Naive thymus-derived CD4-positive, alpha-beta T cell (primary cell): ENCODE measurements at regions of chr5 and their contacts with region 1.

Region 1: GRCh38 chr5:79133657-79134451 is 22.2 kb downstream of the BHMT start:
- DNase-seq: peak; percentile 26 to 60 (median 48)
- ATAC-seq: peak; percentile 84
- H3K4me3 ChIP-seq: peak overlapping the region; percentile 42
- H3K4me3 Mint-ChIP-seq: peak overlapping the region; percentile 45 to 80 (median 76)
- H3K27ac ChIP-seq: no peak overlapping the region
- H3K27ac Mint-ChIP-seq: peak overlapping the region in 4 of 9 donors; percentile 4 to 76 (median 42)
- H3K4me1 ChIP-seq: peaks cover 9 to 11% of the 10 kb centered on the region in 2 donors
- H3K4me1 Mint-ChIP-seq: peaks cover 7 to 17% (median 10%) of the 10 kb centered on the region in 7 donors
- H3K27me3 ChIP-seq: no peaks in the 10 kb centered on the region
- H3K27me3 Mint-ChIP-seq: peaks cover 0 to 9% (median 4%) of the 10 kb centered on the region in 5 donors

Region 2: GRCh38 chr5:78320401-78320800 is 813.5 kb before region 1 on chr5:
- CTCF ChIA-PET with region 1: interaction called, 4 read pairs
- POLR2A ChIA-PET with region 1: no interaction called
- intact Hi-C with region 1: loop called in 1 of 2 experiments (anchors 5 kb)
- DNase-seq: peak in 4 of 9 donors; percentile 6 to 15 (median 8)
- ATAC-seq: no peak
- H3K4me3 ChIP-seq: no peak overlapping the region
- H3K4me3 Mint-ChIP-seq: no peak overlapping the region
- H3K27ac ChIP-seq: no peak overlapping the region
- H3K27ac Mint-ChIP-seq: no peak overlapping the region
- H3K4me1 ChIP-seq: no peaks in the 10 kb centered on the region
- H3K4me1 Mint-ChIP-seq: no peaks in the 10 kb centered on the region
- H3K27me3 ChIP-seq: no peaks in the 10 kb centered on the region
- H3K27me3 Mint-ChIP-seq: peaks cover 0 to 18% (median 5%) of the 10 kb centered on the region in 5 donors

Region 3: GRCh38 chr5:78886341-78887230 is 247.3 kb before region 1 on chr5:
- CTCF ChIA-PET with region 1: no interaction called
- POLR2A ChIA-PET with region 1: no interaction called
- intact Hi-C with region 1: loop called in 1 of 2 experiments (anchors 1 kb)
- DNase-seq: peak in 2 of 9 donors; percentile 6 to 7
- ATAC-seq: no peak
- H3K4me3 ChIP-seq: no peak overlapping the region
- H3K4me3 Mint-ChIP-seq: no peak overlapping the region
- H3K27ac ChIP-seq: no peak overlapping the region
- H3K27ac Mint-ChIP-seq: no peak overlapping the region
- H3K4me1 ChIP-seq: peaks cover 0 to 6% of the 10 kb centered on the region in 2 donors
- H3K4me1 Mint-ChIP-seq: peaks cover 3 to 21% (median 19%) of the 10 kb centered on the region in 7 donors
- H3K27me3 ChIP-seq: no peaks in the 10 kb centered on the region
- H3K27me3 Mint-ChIP-seq: no peaks in the 10 kb centered on the region

Region 4: GRCh38 chr5:79020861-79021561 is 112.8 kb before region 1 on chr5:
- CTCF ChIA-PET with region 1: interaction called, 49 read pairs
- POLR2A ChIA-PET with region 1: no interaction called
- intact Hi-C with region 1: loop called (anchors 1 kb)
- DNase-seq: peak in 6 of 9 donors; percentile 4 to 25 (median 14)
- ATAC-seq: peak; percentile 79
- H3K4me3 ChIP-seq: no peak overlapping the region
- H3K4me3 Mint-ChIP-seq: peak overlapping the region in 2 of 10 donors; percentile 24 to 44
- H3K27ac ChIP-seq: no peak overlapping the region
- H3K27ac Mint-ChIP-seq: no peak overlapping the region
- H3K4me1 ChIP-seq: no peaks in the 10 kb centered on the region
- H3K4me1 Mint-ChIP-seq: peaks cover 7 to 14% (median 12%) of the 10 kb centered on the region in 7 donors
- H3K27me3 ChIP-seq: peaks cover 0 to 3% of the 10 kb centered on the region in 2 donors
- H3K27me3 Mint-ChIP-seq: peaks cover 56 to 79% (median 63%) of the 10 kb centered on the region in 5 donors

Region 5: GRCh38 chr5:79050498-79050897 is 83.4 kb before region 1 on chr5:
- CTCF ChIA-PET with region 1: no interaction called
- POLR2A ChIA-PET with region 1: no interaction called
- intact Hi-C with region 1: no loop called
- DNase-seq: no peak
- ATAC-seq: no peak
- H3K4me3 ChIP-seq: no peak overlapping the region
- H3K4me3 Mint-ChIP-seq: no peak overlapping the region
- H3K27ac ChIP-seq: no peak overlapping the region
- H3K27ac Mint-ChIP-seq: no peak overlapping the region
- H3K4me1 ChIP-seq: no peaks in the 10 kb centered on the region
- H3K4me1 Mint-ChIP-seq: no peaks in the 10 kb centered on the region
- H3K27me3 ChIP-seq: no peaks in the 10 kb centered on the region
- H3K27me3 Mint-ChIP-seq: peaks cover 0 to 19% (median 10%) of the 10 kb centered on the region in 5 donors

Region 6: DNA sequence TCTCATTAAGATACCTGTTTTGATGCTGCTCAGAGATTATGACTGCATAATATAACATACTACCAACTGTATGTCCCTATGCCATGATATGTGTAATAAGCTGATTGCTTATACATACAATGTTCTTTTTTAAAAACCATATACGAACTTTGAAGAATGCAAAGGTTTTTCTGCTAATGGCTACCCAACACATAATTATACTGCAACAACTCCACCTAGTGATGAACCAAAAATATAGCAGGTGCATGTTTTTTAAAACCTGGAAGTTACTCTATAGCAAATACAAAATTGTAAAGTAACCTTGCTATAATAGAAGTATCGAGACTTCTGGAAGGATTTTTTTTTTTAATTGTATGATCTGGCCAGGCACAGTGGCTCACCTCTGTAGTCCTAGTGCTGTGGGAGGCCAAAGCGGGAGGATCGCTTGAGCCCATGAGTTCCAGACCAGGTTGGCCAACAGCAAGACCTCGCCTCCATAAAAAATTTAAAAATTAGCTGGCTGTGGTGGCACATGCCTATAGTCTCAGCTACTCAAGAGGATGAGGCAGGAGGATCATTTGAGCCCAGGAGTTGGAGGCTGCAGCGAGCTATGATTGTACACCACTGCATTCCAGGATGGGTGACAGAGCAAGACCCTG is 331.0 kb after region 1 on chr5:
- CTCF ChIA-PET with region 1: interaction called, 14 read pairs
- POLR2A ChIA-PET with region 1: no interaction called
- intact Hi-C with region 1: loop called in 1 of 2 experiments (anchors 1 kb)
- DNase-seq: peak in 5 of 9 donors; percentile 12 to 34 (median 32)
- ATAC-seq: peak; percentile 54
- H3K4me3 ChIP-seq: no peak overlapping the region
- H3K4me3 Mint-ChIP-seq: no peak overlapping the region
- H3K27ac ChIP-seq: no peak overlapping the region
- H3K27ac Mint-ChIP-seq: no peak overlapping the region
- H3K4me1 ChIP-seq: no peaks in the 10 kb centered on the region
- H3K4me1 Mint-ChIP-seq: peaks cover 0 to 2% (median 0%) of the 10 kb centered on the region in 7 donors
- H3K27me3 ChIP-seq: no peaks in the 10 kb centered on the region
- H3K27me3 Mint-ChIP-seq: peaks cover 0 to 9% (median 5%) of the 10 kb centered on the region in 5 donors

Region 7: DNA sequence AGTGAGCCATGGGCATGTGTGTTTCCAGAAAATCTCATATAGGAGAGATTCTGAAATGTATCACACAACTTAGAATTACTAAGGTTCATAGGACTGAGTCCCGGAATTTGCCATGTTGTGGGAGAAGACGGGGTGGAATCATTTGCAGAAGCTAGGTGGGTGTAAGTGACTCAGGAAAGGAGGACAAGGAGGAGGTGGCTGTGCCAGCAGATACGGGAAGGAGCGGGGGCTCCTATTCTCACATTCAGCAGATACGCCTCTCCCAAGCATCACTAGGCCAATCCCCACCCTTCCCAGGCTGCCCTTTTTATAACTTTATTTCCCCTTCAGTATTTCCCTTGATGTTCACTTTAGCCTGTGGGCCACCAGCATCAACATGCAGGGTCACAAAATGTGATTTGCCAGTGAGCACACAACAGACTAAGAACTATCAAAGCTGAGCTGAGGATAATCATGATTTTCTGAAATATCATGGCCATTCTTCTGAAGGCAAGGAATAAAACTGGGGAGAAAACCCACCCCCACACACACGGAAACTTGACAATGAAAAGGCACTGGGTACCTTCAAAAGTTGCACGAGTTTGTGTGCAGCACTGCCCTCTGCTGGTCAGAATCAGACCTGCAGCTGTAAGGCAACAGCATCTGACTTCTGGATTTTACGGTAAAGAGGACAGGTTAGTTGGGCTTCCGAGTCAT is 724.0 kb after region 1 on chr5:
- CTCF ChIA-PET with region 1: no interaction called
- POLR2A ChIA-PET with region 1: no interaction called
- intact Hi-C with region 1: loop called in 1 of 2 experiments (anchors 5 kb)
- DNase-seq: peak; percentile 39 to 83 (median 64)
- ATAC-seq: peak; percentile 79
- H3K4me3 ChIP-seq: no peak overlapping the region
- H3K4me3 Mint-ChIP-seq: no peak overlapping the region
- H3K27ac ChIP-seq: no peak overlapping the region
- H3K27ac Mint-ChIP-seq: no peak overlapping the region
- H3K4me1 ChIP-seq: no peaks in the 10 kb centered on the region
- H3K4me1 Mint-ChIP-seq: peaks cover 0 to 2% (median 0%) of the 10 kb centered on the region in 7 donors
- H3K27me3 ChIP-seq: no peaks in the 10 kb centered on the region
- H3K27me3 Mint-ChIP-seq: peaks cover 0 to 22% (median 0%) of the 10 kb centered on the region in 5 donors

Region 8: GRCh38 chr5:80308526-80308925 is 1174.7 kb after region 1 on chr5:
- CTCF ChIA-PET with region 1: no interaction called
- POLR2A ChIA-PET with region 1: no interaction called
- intact Hi-C with region 1: loop called in 1 of 2 experiments (anchors 5 kb)
- DNase-seq: no peak
- ATAC-seq: no peak
- H3K4me3 ChIP-seq: no peak overlapping the region
- H3K4me3 Mint-ChIP-seq: no peak overlapping the region
- H3K27ac ChIP-seq: no peak overlapping the region
- H3K27ac Mint-ChIP-seq: no peak overlapping the region
- H3K4me1 ChIP-seq: no peaks in the 10 kb centered on the region
- H3K4me1 Mint-ChIP-seq: peaks cover 0 to 4% (median 0%) of the 10 kb centered on the region in 7 donors
- H3K27me3 ChIP-seq: no peaks in the 10 kb centered on the region
- H3K27me3 Mint-ChIP-seq: peaks cover 0 to 3% (median 0%) of the 10 kb centered on the region in 5 donors